GM12878 (cell line): ENCODE measurements at regions of chr17 and their contacts with region 1.

Region 1: DNA sequence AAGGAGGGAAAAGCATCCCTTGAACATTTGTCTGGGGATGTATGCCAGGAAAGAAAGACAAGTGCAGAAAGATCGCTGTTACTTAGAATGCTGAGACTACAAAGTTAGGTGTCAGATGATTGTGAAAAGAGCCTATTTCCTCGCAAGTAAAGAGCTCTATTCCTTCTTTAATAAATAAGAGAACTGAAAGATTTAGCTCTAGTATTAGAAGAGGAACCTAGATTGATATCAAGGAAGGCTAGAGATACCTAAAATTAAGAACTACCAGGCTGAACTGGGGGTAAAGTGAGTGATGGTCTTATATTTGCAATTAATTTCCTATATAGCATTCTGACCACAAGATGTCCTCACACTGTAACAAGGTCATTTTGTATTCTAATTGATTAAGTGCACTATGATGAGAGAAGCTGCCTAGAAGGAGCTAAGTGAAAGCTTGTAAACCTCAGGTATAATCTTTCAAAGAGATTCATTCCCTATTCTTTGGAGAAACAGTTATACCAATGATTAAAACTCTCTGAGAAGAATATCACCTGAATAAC is 62.3 kb downstream of the SSH2 start:
- DNase-seq: no peak
- ATAC-seq: peak; percentile 58
- H3K4me3 ChIP-seq: no peak overlapping the region
- H3K27ac ChIP-seq: no peak overlapping the region
- H3K4me1 ChIP-seq: peaks cover 7% of the 10 kb centered on the region
- H3K27me3 ChIP-seq: no peaks in the 10 kb centered on the region
- CTCF ChIP-seq: peak in 1 of 3 experiments; percentile 32; a peak in 3 of 6 replicates
- EP300 ChIP-seq: no peak
- POLR2A ChIP-seq: no peak
- RAD21 ChIP-seq: peak; percentile 39; the same call in 1 of the 2 replicates

Region 2: GRCh38 chr17:29880031-29880430 is 12.3 kb after region 1 on chr17:
- CTCF ChIA-PET with region 1: interaction called, 12 read pairs
- POLR2A ChIA-PET with region 1: no interaction called
- RAD21 ChIA-PET with region 1: no interaction called
- SMC1A ChIA-PET with region 1: interaction called, 4 read pairs
- in situ Hi-C with region 1: no loop called
- intact Hi-C with region 1: no loop called
- DNase-seq: no peak
- ATAC-seq: no peak
- H3K4me3 ChIP-seq: no peak overlapping the region
- H3K27ac ChIP-seq: no peak overlapping the region
- H3K4me1 ChIP-seq: no peaks in the 10 kb centered on the region
- H3K27me3 ChIP-seq: no peaks in the 10 kb centered on the region
- CTCF ChIP-seq: no peak
- EP300 ChIP-seq: no peak
- POLR2A ChIP-seq: no peak
- RAD21 ChIP-seq: no peak

Region 3: DNA sequence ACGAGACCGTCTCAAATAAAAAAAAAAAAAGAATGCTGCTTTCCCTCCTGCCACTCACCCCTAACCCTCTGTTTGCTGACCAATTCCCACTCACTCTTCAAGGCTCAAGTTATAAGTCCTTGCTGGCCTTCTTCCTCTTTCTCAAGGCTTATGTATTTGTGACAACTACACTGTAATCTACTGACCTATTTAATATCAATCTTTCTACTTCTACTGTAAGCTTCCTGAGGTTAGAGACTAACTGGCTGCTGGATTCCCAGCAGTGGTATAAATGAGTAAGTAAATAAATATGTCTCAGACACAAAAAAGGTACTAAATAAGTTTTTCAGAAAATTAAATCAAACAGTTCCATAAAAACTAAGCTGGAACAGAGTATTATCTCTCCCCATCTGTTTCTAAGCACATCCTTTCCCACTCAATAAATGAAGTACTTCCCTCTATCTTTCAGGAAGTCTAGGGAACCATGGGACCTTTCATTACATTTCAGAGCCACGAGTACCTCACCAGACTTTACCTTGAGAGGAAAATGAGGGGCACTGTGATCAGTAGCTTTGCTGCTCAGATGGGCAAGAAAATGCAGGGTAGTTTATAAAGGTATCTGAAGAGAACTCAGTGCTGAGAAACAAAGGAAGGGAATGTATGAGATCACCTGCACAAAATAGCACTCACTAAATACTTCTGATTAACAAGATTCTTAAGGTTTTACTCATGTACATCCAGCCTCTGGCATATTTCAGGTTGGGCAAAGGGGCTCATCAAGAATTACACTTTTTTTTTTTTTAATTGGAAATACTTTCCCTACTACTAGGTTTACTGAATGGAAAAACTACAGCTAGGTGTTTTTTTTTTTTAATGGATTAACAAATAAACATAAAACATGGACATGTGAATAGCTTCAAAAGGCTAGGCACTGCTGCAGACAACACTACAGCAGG is 51.5 kb after region 1 on chr17:
- CTCF ChIA-PET with region 1: interaction called, 11 read pairs
- POLR2A ChIA-PET with region 1: interaction called, 3 read pairs
- RAD21 ChIA-PET with region 1: interaction called, 3 read pairs
- SMC1A ChIA-PET with region 1: interaction called, 4 read pairs
- in situ Hi-C with region 1: no loop called
- intact Hi-C with region 1: no loop called
- DNase-seq: no peak
- ATAC-seq: peak; percentile 53
- H3K4me3 ChIP-seq: no peak overlapping the region
- H3K27ac ChIP-seq: no peak overlapping the region
- H3K4me1 ChIP-seq: peaks cover 10% of the 10 kb centered on the region; the same call in 1 of the 2 replicates
- H3K27me3 ChIP-seq: no peaks in the 10 kb centered on the region
- CTCF ChIP-seq: no peak
- EP300 ChIP-seq: no peak
- POLR2A ChIP-seq: no peak
- RAD21 ChIP-seq: no peak